ENCODE measurements at regions of chr22 and their contacts with region 1.

Region 1: DNA sequence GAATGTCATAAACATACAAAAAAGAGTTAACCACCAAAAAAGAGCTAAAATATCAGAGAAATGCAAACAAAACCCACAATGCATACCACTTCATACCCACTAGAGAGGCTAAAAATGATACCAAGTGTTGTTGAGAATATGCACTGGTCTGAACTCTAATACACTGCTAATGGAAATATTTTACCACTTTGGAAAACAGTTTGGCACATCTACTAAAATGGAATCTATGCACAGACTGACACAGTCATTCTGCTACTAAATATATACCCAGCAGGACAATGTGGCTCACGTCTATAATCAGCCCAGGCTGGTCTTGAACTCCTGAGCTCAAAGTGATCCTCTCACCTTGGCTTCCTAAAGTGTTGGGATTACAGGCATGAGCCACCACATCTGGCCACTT is 18.0 kb downstream of the MAPK1 start:
- DNase-seq: no peak
- H3K4me3 ChIP-seq: no peak overlapping the region
- H3K27ac ChIP-seq: no peak overlapping the region
- H3K4me1 ChIP-seq: no peaks in the 10 kb centered on the region
- H3K27me3 ChIP-seq: no peaks in the 10 kb centered on the region
- CTCF ChIP-seq: no peak

Region 2: GRCh38 chr22:21800552-21801303 is 48.8 kb before region 1 on chr22:
- CTCF ChIA-PET with region 1: interaction called, 10 read pairs
- POLR2A ChIA-PET with region 1: no interaction called
- intact Hi-C with region 1: no loop called
- DNase-seq: no peak
- H3K4me3 ChIP-seq: no peak overlapping the region
- H3K27ac ChIP-seq: no peak overlapping the region
- H3K4me1 ChIP-seq: no peaks in the 10 kb centered on the region
- H3K27me3 ChIP-seq: no peaks in the 10 kb centered on the region
- CTCF ChIP-seq: no peak

Region 3: GRCh38 chr22:21832291-21833290 is 16.9 kb before region 1 on chr22:
- CTCF ChIA-PET with region 1: no interaction called
- POLR2A ChIA-PET with region 1: no interaction called
- intact Hi-C with region 1: no loop called
- DNase-seq: no peak
- H3K4me3 ChIP-seq: no peak overlapping the region
- H3K27ac ChIP-seq: no peak overlapping the region
- H3K4me1 ChIP-seq: peaks cover 7% of the 10 kb centered on the region
- H3K27me3 ChIP-seq: no peaks in the 10 kb centered on the region
- CTCF ChIP-seq: no peak

Region 4: DNA sequence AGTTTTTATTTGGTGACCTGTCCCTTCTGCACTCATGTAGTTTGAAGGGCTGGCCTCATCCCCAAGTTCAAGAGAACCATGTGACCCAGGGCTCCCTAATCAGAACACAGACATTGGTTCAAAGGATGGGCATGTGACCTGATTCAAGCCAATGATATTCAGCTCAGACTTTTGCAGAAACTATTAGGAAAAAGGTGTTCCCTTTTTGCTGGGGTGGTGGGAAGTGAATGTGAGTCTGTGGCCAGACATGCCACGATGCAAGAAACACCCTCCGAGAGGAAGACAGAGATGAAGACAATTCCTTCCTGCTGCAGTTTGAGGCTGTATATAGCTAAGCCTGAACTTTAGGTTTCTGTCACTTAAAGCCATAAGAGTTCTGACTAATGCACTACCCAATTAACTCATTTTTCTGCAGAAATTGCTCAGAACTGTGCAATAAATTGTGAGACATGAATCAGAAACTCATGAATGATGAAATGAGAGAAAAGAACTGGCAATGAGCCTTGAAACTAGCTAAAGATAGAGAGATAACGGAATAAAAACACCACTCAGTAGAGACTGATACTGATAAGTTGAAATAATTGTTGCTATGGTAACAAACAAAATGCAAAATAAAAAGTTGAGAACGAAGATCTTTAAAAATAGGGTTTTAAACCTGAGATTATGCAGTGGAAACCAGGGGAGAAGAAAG is 27.1 kb after region 1 on chr22:
- CTCF ChIA-PET with region 1: no interaction called
- POLR2A ChIA-PET with region 1: no interaction called
- intact Hi-C with region 1: no loop called
- DNase-seq: no peak
- H3K4me3 ChIP-seq: no peak overlapping the region
- H3K27ac ChIP-seq: peak overlapping the region; percentile 9; the same call in 1 of the 2 replicates
- H3K4me1 ChIP-seq: no peaks in the 10 kb centered on the region
- H3K27me3 ChIP-seq: no peaks in the 10 kb centered on the region
- CTCF ChIP-seq: no peak